ENCODE measurements at regions of chr14 and their contacts with region 1.

Region 1: GRCh38 chr14:75002392-75003249 is at the start of gene EIF2B2:
- DNase-seq: peak; percentile 100
- H3K4me3 Mint-ChIP-seq: peak within 1 kb of the TSS; percentile 98
- H3K27ac Mint-ChIP-seq: peak within 1 kb of the TSS; percentile 79
- H3K4me1 Mint-ChIP-seq: peaks cover 34% of the 10 kb centered on the region
- H3K27me3 Mint-ChIP-seq: no peaks in the 10 kb centered on the region
- total RNA-seq, gene EIF2B2: 61.9 to 62.6 TPM

Region 2: GRCh38 chr14:74881431-74882361 is 120.9 kb before region 1 on chr14 and contains the start of gene DLST:
- CTCF ChIA-PET with region 1: no interaction called
- POLR2A ChIA-PET with region 1: no interaction called
- intact Hi-C with region 1: loop called (anchors 10 kb)
- DNase-seq: peak; percentile 91
- H3K4me3 Mint-ChIP-seq: peak within 1 kb of the TSS; percentile 99
- H3K27ac Mint-ChIP-seq: peak within 1 kb of the TSS; percentile 97
- H3K4me1 Mint-ChIP-seq: peaks cover 66% of the 10 kb centered on the region
- H3K27me3 Mint-ChIP-seq: no peaks in the 10 kb centered on the region
- total RNA-seq, gene DLST: 132 to 137 TPM

Region 3: DNA sequence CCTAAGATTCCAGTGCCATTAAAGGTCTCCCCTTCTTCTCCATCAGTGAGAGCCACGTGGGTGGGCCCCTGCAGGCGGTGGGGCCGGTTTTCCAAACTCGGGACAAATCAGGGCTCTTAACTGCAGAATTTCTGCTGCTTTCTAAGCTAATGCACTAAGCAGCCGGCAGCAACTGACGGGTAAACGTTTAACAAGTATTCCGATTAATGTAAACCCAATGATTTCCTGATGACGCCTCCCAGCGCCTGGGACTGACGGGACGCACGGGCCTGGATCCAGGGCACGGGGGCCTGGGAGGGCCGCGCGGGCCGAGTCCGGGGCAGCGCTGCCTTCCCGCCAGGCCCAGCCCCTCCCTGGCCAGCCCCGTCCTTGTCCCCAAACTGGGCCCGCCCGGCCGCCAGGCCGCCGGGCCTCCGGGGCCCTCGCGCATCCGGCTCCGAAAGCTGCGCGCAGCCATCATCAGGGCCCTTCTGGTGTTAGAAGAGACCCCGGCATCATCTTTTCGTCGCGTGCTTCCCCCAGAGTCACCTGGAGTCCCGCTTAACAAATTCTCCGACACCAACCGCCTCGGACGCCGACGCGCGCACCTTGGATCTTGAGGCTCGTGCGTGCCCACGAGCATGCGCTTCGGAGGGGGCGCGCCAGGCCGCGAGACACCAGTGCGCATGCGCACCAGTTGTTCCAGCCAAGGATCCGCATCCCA is 48.4 kb after region 1 on chr14 and contains the start of gene MLH3:
- CTCF ChIA-PET with region 1: no interaction called
- POLR2A ChIA-PET with region 1: no interaction called
- intact Hi-C with region 1: loop called (anchors 2 kb)
- DNase-seq: peak; percentile 82
- H3K4me3 Mint-ChIP-seq: peak within 1 kb of the TSS; percentile 92
- H3K27ac Mint-ChIP-seq: peak within 1 kb of the TSS; percentile 86
- H3K4me1 Mint-ChIP-seq: peaks cover 70% of the 10 kb centered on the region
- H3K27me3 Mint-ChIP-seq: no peaks in the 10 kb centered on the region
- total RNA-seq, gene MLH3: 19.7 to 21.2 TPM

Region 4: DNA sequence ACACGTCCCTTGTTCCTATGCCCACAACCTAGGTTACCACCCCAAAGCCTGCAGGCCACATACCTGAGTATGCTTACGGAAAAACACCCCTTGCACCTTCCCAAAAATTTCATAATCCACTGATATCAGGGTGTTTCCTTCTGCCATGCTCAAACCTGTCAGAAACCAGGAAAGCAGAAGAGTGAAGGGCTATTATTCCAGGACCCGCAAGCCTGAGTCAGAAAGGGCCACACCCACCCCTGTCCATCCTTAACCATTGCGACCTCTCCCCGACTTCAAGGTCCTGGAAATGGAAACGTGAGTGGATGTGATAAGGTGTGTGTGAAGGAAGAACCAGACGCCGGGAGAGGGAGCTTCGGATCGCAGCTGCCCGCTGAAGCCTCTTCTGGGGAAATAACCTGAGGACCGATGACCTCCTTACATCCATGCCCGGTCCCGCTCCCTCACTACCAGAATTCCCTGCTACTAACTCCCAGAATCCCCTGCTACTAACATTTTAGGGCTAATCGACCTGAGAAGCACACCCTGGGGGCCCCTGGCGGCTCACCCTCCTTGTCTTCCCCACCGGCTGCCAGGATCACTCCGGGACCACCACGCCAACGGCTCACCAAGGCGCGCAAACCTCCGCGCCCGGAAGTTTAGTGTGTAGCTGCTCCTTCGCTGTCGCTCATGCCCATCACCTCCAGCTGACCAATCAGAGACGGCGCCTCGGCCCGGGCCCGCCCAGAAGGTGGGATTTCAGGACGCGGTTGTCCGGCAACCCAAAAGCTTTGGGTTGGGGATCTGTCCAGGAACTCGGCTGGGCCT is 61.0 kb after region 1 on chr14 and contains the start of gene ACYP1:
- CTCF ChIA-PET with region 1: no interaction called
- POLR2A ChIA-PET with region 1: no interaction called
- intact Hi-C with region 1: loop called (anchors 2 kb)
- DNase-seq: peak; percentile 96
- H3K4me3 Mint-ChIP-seq: peak within 1 kb of the TSS; percentile 99
- H3K27ac Mint-ChIP-seq: peak within 1 kb of the TSS; percentile 95
- H3K4me1 Mint-ChIP-seq: peaks cover 37% of the 10 kb centered on the region
- H3K27me3 Mint-ChIP-seq: no peaks in the 10 kb centered on the region
- total RNA-seq, gene ACYP1: 41.3 to 45.8 TPM

Measured in activated CD4-positive, alpha-beta memory T cell treated with anti-CD3 and anti-CD28 coated beads for 36 hours (primary cell).